ENCODE measurements at regions of chr17 and their contacts with region 1.

Region 1: DNA sequence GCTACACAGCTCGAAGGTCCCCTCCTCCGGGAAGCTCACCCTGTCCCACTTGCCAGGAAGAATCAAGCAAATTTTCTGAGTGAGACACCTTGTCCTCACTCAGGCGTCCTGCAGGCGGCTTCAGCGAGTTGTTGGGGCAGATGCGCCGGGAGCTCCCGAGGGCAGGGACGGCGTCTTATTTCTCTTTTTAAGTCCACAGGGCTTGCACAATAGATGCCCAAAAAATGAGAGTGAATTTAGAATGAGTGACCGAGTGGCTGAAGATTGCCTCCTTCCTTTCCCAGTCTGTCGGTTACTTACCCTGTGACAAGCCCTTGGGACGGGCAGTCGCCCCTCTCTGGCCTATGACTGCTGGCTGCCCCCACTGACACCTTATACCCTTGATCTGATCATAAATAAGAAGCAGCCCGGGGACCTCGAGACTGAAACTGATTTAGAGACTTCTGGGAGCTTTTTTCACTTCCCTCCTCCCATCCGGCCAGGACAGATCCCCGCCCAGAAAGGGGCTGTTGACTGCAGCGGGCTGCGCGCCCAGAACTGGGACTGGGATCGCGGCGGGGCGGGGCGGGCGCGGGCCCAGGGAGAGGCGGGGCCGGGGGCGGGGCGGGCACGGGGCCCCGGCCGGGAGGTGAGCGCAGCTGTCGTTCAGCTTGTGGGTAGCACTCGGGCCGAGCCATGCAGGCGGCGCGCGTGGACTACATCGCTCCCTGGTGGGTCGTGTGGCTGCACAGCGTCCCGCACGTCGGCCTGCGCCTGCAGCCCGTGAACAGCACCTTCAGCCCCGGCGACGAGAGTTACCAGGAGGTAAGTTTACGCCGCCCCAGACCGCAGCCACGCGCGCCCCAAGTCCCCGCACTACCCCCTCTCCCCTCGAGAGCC is at the start of gene TTYH2:
- DNase-seq: peak; percentile 78
- H3K4me3 Mint-ChIP-seq: peak within 1 kb of the TSS; percentile 74
- H3K27ac Mint-ChIP-seq: peak within 1 kb of the TSS; percentile 24
- H3K4me1 Mint-ChIP-seq: peaks cover 62% of the 10 kb centered on the region
- H3K27me3 Mint-ChIP-seq: no peaks in the 10 kb centered on the region
- total RNA-seq, gene TTYH2: 2.5 to 2.8 TPM

Region 2: DNA sequence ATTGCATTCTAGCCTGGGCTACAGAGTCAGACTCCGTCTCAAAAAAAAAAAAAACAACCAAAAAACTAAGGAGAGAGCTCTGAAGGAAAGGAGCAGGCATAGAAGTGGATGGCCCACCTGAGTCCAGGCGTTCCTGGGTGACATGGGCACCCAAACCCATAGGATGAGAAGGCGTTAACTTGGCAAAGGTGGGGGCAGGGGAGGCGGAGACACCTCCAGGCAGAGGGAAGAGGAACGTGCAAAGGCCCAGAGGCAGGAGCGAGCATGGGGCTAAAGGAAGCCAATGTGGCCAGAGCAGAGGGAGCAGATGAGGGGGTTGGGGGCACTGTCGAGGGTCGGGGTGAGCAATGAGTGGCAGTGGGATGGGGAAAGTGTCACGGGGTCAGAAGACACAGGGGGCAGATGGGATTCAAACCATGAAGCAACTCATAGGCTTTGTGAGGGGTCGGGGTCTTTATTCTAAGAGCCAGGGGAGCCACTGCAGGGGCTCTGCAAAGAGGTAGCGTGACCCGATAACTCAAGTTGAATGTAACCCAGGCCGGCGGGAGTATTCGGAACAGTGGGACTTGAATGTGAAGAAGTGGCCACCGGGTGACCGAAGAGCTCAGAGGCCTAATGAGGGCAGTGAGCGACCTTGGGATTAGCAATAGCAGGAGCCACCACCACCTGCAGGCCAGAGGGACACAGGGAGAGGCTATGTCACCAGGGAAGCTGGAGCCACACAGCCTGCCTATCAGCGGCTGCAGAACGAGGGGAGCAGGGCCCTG is 12.0 kb after region 1 on chr17:
- CTCF ChIA-PET with region 1: no interaction called
- intact Hi-C with region 1: no loop called
- DNase-seq: no peak
- H3K4me3 Mint-ChIP-seq: no peak overlapping the region
- H3K27ac Mint-ChIP-seq: no peak overlapping the region
- H3K4me1 Mint-ChIP-seq: no peaks in the 10 kb centered on the region
- H3K27me3 Mint-ChIP-seq: no peaks in the 10 kb centered on the region

Region 3: DNA sequence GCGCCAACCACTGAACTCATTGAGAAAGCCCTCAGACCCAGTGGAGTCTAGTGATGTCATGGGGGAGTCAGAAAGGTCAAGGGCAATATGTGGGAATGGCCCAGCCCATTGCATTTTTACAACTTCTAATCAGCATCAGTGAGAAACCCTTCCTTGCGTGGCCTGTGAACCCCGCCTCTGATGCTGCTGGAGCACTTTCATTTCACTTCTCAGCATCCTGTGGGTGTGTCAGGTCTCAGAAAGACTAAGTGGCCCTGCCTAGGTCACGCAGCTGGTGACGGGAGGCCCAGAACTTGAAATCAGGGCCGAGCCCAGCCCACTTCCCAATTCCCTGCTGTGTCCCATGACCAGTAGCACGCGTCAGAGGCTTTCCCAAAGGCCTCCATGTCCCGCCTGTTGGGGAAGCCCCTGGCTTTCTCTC is 67.0 kb after region 1 on chr17:
- CTCF ChIA-PET with region 1: interaction called, 3 read pairs
- intact Hi-C with region 1: loop called (anchors 2 kb)
- DNase-seq: peak; percentile 74
- H3K4me3 Mint-ChIP-seq: no peak overlapping the region
- H3K27ac Mint-ChIP-seq: peak overlapping the region; percentile 69
- H3K4me1 Mint-ChIP-seq: peaks cover 34% of the 10 kb centered on the region
- H3K27me3 Mint-ChIP-seq: no peaks in the 10 kb centered on the region

Region 4: DNA sequence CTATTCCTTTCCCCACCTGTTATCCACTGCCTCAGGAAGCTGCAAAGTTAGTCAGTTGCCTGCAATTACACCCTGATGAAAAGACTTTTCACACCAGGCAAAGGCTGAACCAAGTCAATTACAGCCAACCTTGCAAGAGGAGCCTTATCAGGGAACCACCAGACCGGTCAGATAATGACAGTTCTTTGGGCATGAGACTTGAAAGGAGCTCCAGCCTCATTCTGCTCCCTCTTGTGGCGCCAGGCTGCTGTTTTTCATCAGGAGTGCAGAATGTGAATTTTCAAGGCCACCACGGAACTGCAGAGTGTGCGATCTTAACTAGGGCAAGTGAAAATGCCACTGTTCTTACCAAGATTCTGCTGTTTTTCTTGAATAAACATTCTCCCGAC is 83.4 kb after region 1 on chr17:
- CTCF ChIA-PET with region 1: interaction called, 4 read pairs
- intact Hi-C with region 1: loop called (anchors 1 kb)
- DNase-seq: peak; percentile 48
- H3K4me3 Mint-ChIP-seq: no peak overlapping the region
- H3K27ac Mint-ChIP-seq: no peak overlapping the region
- H3K4me1 Mint-ChIP-seq: peaks cover 14% of the 10 kb centered on the region
- H3K27me3 Mint-ChIP-seq: no peaks in the 10 kb centered on the region

Region 5: DNA sequence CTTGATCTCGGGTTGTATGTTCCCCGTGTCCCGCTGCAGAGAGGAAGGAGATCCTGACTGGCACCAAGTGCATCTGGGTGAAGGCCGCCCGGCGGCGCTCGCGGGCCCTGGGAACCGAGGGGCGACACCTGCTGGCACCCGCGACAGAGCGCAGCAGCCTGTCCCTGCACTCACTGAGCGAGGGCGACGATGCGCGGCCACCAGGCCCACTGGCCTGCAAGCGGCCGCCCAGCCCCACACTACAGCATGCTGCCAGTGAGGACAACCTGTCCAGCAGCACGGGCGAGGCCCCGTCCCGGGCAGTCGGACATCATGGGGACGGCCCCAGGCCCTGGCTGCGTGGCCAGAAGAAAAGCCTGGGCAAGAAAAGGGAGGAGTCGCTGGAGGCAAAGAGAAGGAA is 141.0 kb after region 1 on chr17:
- CTCF ChIA-PET with region 1: no interaction called
- intact Hi-C with region 1: loop called (anchors 1 kb)
- DNase-seq: peak; percentile 79
- H3K4me3 Mint-ChIP-seq: no peak overlapping the region
- H3K27ac Mint-ChIP-seq: no peak overlapping the region
- H3K4me1 Mint-ChIP-seq: peaks cover 6% of the 10 kb centered on the region
- H3K27me3 Mint-ChIP-seq: peaks cover 44% of the 10 kb centered on the region

Region 6: GRCh38 chr17:74442670-74443515 is 229.7 kb after region 1 on chr17:
- CTCF ChIA-PET with region 1: no interaction called
- intact Hi-C with region 1: no loop called
- DNase-seq: no peak
- H3K4me3 Mint-ChIP-seq: no peak overlapping the region
- H3K27ac Mint-ChIP-seq: no peak overlapping the region
- H3K4me1 Mint-ChIP-seq: peaks cover 2% of the 10 kb centered on the region
- H3K27me3 Mint-ChIP-seq: peaks cover 10% of the 10 kb centered on the region

Region 7: GRCh38 chr17:74592087-74592990 is 379.2 kb after region 1 on chr17 and contains the start of gene CD300LD:
- CTCF ChIA-PET with region 1: no interaction called
- intact Hi-C with region 1: no loop called
- DNase-seq: peak; percentile 48
- H3K4me3 Mint-ChIP-seq: peak within 1 kb of the TSS; percentile 30
- H3K27ac Mint-ChIP-seq: no peak within 1 kb of the TSS
- H3K4me1 Mint-ChIP-seq: peaks cover 16% of the 10 kb centered on the region
- H3K27me3 Mint-ChIP-seq: no peaks in the 10 kb centered on the region
- total RNA-seq, gene CD300LD: not detected